Naive thymus-derived CD4-positive, alpha-beta T cell (primary cell): ENCODE measurements at regions of chr17 and their contacts with region 1.

Region 1: GRCh38 chr17:28925912-28926365 is 23.1 kb upstream of the DHRS13 start:
- DNase-seq: peak in 7 of 9 donors; percentile 66 to 89 (median 82)
- ATAC-seq: peak; percentile 96
- H3K4me3 ChIP-seq: peak overlapping the region; percentile 31
- H3K4me3 Mint-ChIP-seq: peak overlapping the region; percentile 34 to 82 (median 60)
- H3K27ac ChIP-seq: peak overlapping the region; percentile 88
- H3K27ac Mint-ChIP-seq: peak overlapping the region; percentile 93 to 99 (median 96)
- H3K4me1 ChIP-seq: peaks cover 26 to 38% of the 10 kb centered on the region in 2 donors
- H3K4me1 Mint-ChIP-seq: peaks cover 35 to 65% (median 54%) of the 10 kb centered on the region in 7 donors
- H3K27me3 ChIP-seq: no peaks in the 10 kb centered on the region
- H3K27me3 Mint-ChIP-seq: no peaks in the 10 kb centered on the region

Region 2: GRCh38 chr17:28743225-28744103 is 182.5 kb before region 1 on chr17 and contains the start of gene TRAF4:
- CTCF ChIA-PET with region 1: no interaction called
- POLR2A ChIA-PET with region 1: interaction called, 3 read pairs
- intact Hi-C with region 1: loop called in 1 of 2 experiments (anchors 2 kb)
- DNase-seq: peak; percentile 60 to 86 (median 73)
- ATAC-seq: peak; percentile 93
- H3K4me3 ChIP-seq: peak within 1 kb of the TSS; percentile 82
- H3K4me3 Mint-ChIP-seq: peak within 1 kb of the TSS; percentile 87 to 94 (median 91)
- H3K27ac ChIP-seq: peak within 1 kb of the TSS; percentile 83
- H3K27ac Mint-ChIP-seq: peak within 1 kb of the TSS; percentile 78 to 95 (median 92)
- H3K4me1 ChIP-seq: peaks cover 11 to 28% of the 10 kb centered on the region in 2 donors
- H3K4me1 Mint-ChIP-seq: peaks cover 2 to 42% (median 27%) of the 10 kb centered on the region in 7 donors
- H3K27me3 ChIP-seq: no peaks in the 10 kb centered on the region
- H3K27me3 Mint-ChIP-seq: no peaks in the 10 kb centered on the region
- total RNA-seq, gene TRAF4: 22.3 to 228 (median 81.6) TPM

Region 3: GRCh38 chr17:28908640-28909167 is 17.2 kb before region 1 on chr17:
- CTCF ChIA-PET with region 1: no interaction called
- POLR2A ChIA-PET with region 1: interaction called, 11 read pairs
- intact Hi-C with region 1: loop called in 1 of 2 experiments (anchors 1 kb)
- DNase-seq: no peak
- ATAC-seq: no peak
- H3K4me3 ChIP-seq: no peak overlapping the region
- H3K4me3 Mint-ChIP-seq: no peak overlapping the region
- H3K27ac ChIP-seq: peak overlapping the region; percentile 3
- H3K27ac Mint-ChIP-seq: peak overlapping the region in 4 of 9 donors; percentile 4 to 52 (median 28)
- H3K4me1 ChIP-seq: no peaks in the 10 kb centered on the region
- H3K4me1 Mint-ChIP-seq: peaks cover 0 to 11% (median 0%) of the 10 kb centered on the region in 7 donors
- H3K27me3 ChIP-seq: no peaks in the 10 kb centered on the region
- H3K27me3 Mint-ChIP-seq: no peaks in the 10 kb centered on the region

Region 4: GRCh38 chr17:28937044-28937729 is 11.2 kb after region 1 on chr17:
- CTCF ChIA-PET with region 1: interaction called, 4 read pairs
- POLR2A ChIA-PET with region 1: interaction called, 15 read pairs
- intact Hi-C with region 1: loop called in 1 of 2 experiments (anchors 2 kb)
- DNase-seq: no peak
- ATAC-seq: peak; percentile 8
- H3K4me3 ChIP-seq: no peak overlapping the region
- H3K4me3 Mint-ChIP-seq: peak overlapping the region in 1 of 10 donors; percentile 36
- H3K27ac ChIP-seq: no peak overlapping the region
- H3K27ac Mint-ChIP-seq: peak overlapping the region in 6 of 9 donors; percentile 32 to 79 (median 71)
- H3K4me1 ChIP-seq: peaks cover 20 to 41% of the 10 kb centered on the region in 2 donors
- H3K4me1 Mint-ChIP-seq: peaks cover 63 to 95% (median 88%) of the 10 kb centered on the region in 7 donors
- H3K27me3 ChIP-seq: no peaks in the 10 kb centered on the region
- H3K27me3 Mint-ChIP-seq: no peaks in the 10 kb centered on the region

Region 5: GRCh38 chr17:29019475-29020181 is 93.7 kb after region 1 on chr17:
- CTCF ChIA-PET with region 1: no interaction called
- POLR2A ChIA-PET with region 1: no interaction called
- intact Hi-C with region 1: no loop called
- DNase-seq: no peak
- ATAC-seq: no peak
- H3K4me3 ChIP-seq: no peak overlapping the region
- H3K4me3 Mint-ChIP-seq: peak overlapping the region in 4 of 10 donors; percentile 16 to 33 (median 26)
- H3K27ac ChIP-seq: no peak overlapping the region
- H3K27ac Mint-ChIP-seq: no peak overlapping the region
- H3K4me1 ChIP-seq: peaks cover 5 to 7% of the 10 kb centered on the region in 2 donors
- H3K4me1 Mint-ChIP-seq: peaks cover 0 to 14% (median 5%) of the 10 kb centered on the region in 7 donors
- H3K27me3 ChIP-seq: peaks cover 4 to 10% of the 10 kb centered on the region in 2 donors
- H3K27me3 Mint-ChIP-seq: peaks cover 39 to 60% (median 58%) of the 10 kb centered on the region in 5 donors

Region 6: DNA sequence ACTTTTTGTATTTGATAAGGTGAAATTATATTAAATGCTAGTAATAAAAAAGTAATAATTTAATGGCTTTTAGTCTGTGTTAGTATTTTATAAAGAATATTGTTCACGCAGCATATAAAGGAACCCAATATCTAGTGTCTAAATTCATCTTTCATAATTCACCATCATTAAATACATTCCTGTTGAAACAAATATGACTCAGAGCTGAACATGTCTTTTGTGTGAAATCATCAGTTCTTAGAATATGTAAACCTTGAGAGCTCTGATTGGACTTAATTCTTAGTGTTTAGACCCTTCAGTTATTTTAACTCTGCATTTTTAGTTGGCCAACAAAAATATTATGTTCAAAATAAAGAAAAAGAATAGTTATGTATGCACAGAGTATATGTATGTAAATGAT is 569.1 kb after region 1 on chr17:
- CTCF ChIA-PET with region 1: no interaction called
- POLR2A ChIA-PET with region 1: no interaction called
- intact Hi-C with region 1: no loop called
- DNase-seq: no peak
- ATAC-seq: no peak
- H3K4me3 ChIP-seq: no peak overlapping the region
- H3K4me3 Mint-ChIP-seq: no peak overlapping the region
- H3K27ac ChIP-seq: no peak overlapping the region
- H3K27ac Mint-ChIP-seq: no peak overlapping the region
- H3K4me1 ChIP-seq: no peaks in the 10 kb centered on the region
- H3K4me1 Mint-ChIP-seq: peaks cover 0 to 5% (median 3%) of the 10 kb centered on the region in 7 donors
- H3K27me3 ChIP-seq: no peaks in the 10 kb centered on the region
- H3K27me3 Mint-ChIP-seq: no peaks in the 10 kb centered on the region